ENCODE measurements at regions of chr11 and their contacts with region 1.

Region 1: GRCh38 chr11:5124891-5125620 is 13.1 kb downstream of the OR52A5 start:
- DNase-seq: no peak
- H3K4me3 ChIP-seq: no peak overlapping the region
- H3K27ac ChIP-seq: no peak overlapping the region
- H3K4me1 ChIP-seq: no peaks in the 10 kb centered on the region
- H3K27me3 ChIP-seq: no peaks in the 10 kb centered on the region
- CTCF ChIP-seq: no peak

Region 2: DNA sequence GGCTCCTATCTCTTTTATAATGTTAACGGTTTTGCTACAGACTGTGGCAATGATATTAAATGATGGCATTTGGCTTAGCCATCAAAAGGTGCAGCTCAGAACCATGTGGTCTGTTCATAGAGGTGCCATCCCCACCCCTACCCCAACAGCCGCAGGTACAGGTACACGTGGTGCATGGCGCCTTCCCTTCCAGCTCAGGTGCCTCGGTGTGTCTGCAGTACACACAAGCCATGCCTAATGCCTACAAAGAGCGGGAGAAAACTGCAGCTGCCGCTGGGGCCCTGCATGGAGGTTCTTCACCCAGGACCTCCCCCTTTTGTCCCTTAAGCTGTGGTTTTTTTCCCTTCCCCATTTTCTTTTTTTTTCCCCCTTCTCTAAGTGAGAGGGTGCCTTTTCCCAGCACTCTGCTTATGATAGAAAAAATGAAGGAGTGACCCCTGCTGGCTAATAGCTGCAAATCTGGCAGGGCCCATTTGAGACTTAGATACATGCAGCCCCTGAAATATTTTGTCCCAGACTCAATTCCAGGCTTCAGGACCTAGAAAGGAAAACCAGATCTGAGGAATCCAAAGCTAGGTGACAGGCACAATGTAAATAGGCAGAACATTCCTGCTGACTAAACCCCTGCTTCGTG is 573.6 kb before region 1 on chr11:
- intact Hi-C with region 1: no loop called
- DNase-seq: no peak
- H3K4me3 ChIP-seq: no peak overlapping the region
- H3K27ac ChIP-seq: no peak overlapping the region
- H3K4me1 ChIP-seq: no peaks in the 10 kb centered on the region
- H3K27me3 ChIP-seq: peaks cover 0 to 2% of the 10 kb centered on the region in 2 donors
- CTCF ChIP-seq: no peak

Region 3: GRCh38 chr11:5154657-5155056 is 29.6 kb after region 1 on chr11 and contains the start of gene OR52A1:
- intact Hi-C with region 1: loop called (anchors 1 kb)
- DNase-seq: no peak
- H3K4me3 ChIP-seq: no peak within 1 kb of the TSS
- H3K27ac ChIP-seq: no peak within 1 kb of the TSS
- H3K4me1 ChIP-seq: no peaks in the 10 kb centered on the region
- H3K27me3 ChIP-seq: no peaks in the 10 kb centered on the region
- CTCF ChIP-seq: no peak

Region 4: GRCh38 chr11:5247472-5248192 is 122.6 kb after region 1 on chr11:
- intact Hi-C with region 1: no loop called
- DNase-seq: no peak
- H3K4me3 ChIP-seq: no peak overlapping the region
- H3K27ac ChIP-seq: no peak overlapping the region
- H3K4me1 ChIP-seq: no peaks in the 10 kb centered on the region
- H3K27me3 ChIP-seq: no peaks in the 10 kb centered on the region
- CTCF ChIP-seq: no peak